CD8-positive, alpha-beta T cell (primary cell): ENCODE measurements at regions of chr1 and their contacts with region 1.

Region 1: DNA sequence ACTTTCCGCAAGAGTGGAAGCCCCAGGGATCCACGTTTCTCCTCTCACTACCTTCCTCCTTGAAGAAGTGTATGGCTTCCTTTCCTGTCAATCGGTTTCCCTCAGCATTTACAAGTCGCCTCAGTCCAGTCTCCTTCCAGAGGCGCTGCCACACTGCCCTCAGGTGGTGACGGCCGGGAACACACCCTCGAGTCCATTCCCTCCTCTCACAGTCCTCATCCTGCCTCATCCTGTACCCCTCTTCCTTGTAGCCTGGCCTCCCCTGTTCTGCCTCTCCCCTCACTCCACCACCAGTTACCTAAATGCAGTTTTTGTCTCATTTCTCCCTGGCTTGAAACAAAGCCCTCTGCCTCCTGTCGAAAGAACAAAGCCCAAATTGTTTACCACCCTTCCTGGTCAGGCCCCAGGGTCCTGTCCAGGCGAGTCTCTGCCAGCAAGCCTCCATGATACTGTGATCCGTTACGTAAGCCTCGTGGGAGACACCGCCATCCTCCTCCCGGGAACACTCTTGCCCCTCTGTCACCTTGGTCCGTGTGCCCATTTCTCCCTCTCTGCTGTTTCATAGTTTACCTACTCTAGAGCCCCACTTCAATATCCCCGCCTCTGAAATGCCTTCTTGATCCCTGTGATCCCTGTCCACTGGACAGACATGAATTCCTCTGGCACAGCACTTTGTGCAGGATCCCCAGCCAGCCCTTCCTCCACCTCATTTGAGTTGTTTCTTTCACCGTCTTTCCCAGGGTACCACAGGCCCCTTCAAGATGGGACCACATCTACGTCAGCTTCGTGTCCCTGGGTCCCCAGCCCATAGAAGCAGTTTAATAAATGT is 23.3 kb upstream of the LSM10 start:
- DNase-seq: peak; percentile 82 to 96 (median 89)
- ATAC-seq: peak; percentile 100
- H3K4me3 ChIP-seq: peak overlapping the region in 1 of 2 experiments; percentile 7
- H3K4me3 Mint-ChIP-seq: peak overlapping the region; percentile 64
- H3K27ac ChIP-seq: peak overlapping the region in 1 of 2 experiments; percentile 60
- H3K27ac Mint-ChIP-seq: peak overlapping the region; percentile 88
- H3K4me1 ChIP-seq: peaks cover 18% of the 10 kb centered on the region
- H3K4me1 Mint-ChIP-seq: peaks cover 23% of the 10 kb centered on the region
- H3K27me3 ChIP-seq: no peaks in the 10 kb centered on the region
- H3K27me3 Mint-ChIP-seq: no peaks in the 10 kb centered on the region
- CTCF ChIP-seq: peak; percentile 87

Region 2: GRCh38 chr1:36083993-36084738 is 336.9 kb before region 1 on chr1 and contains the start of gene TEKT2:
- CTCF ChIA-PET with region 1: no interaction called
- POLR2A ChIA-PET with region 1: no interaction called
- intact Hi-C with region 1: no loop called
- DNase-seq: peak in 2 of 9 experiments; percentile 44 to 55
- ATAC-seq: no peak
- H3K4me3 ChIP-seq: no peak within 1 kb of the TSS
- H3K4me3 Mint-ChIP-seq: peak within 1 kb of the TSS; percentile 5
- H3K27ac ChIP-seq: no peak within 1 kb of the TSS
- H3K27ac Mint-ChIP-seq: no peak within 1 kb of the TSS
- H3K4me1 ChIP-seq: peaks cover 8% of the 10 kb centered on the region
- H3K4me1 Mint-ChIP-seq: peaks cover 7% of the 10 kb centered on the region
- H3K27me3 ChIP-seq: peaks cover 5 to 9% of the 10 kb centered on the region in 2 experiments
- H3K27me3 Mint-ChIP-seq: peaks cover 38% of the 10 kb centered on the region
- CTCF ChIP-seq: no peak
- total RNA-seq, gene TEKT2: 0.35 to 0.47 TPM

Region 3: GRCh38 chr1:36099681-36100341 is 321.2 kb before region 1 on chr1:
- CTCF ChIA-PET with region 1: interaction called, 4 read pairs
- POLR2A ChIA-PET with region 1: no interaction called
- intact Hi-C with region 1: loop called in 1 of 2 experiments (anchors 1 kb)
- DNase-seq: peak; percentile 55 to 89 (median 80)
- ATAC-seq: peak; percentile 88
- H3K4me3 ChIP-seq: peak overlapping the region in 1 of 2 experiments; percentile 7
- H3K4me3 Mint-ChIP-seq: no peak overlapping the region
- H3K27ac ChIP-seq: no peak overlapping the region
- H3K27ac Mint-ChIP-seq: no peak overlapping the region
- H3K4me1 ChIP-seq: peaks cover 8% of the 10 kb centered on the region
- H3K4me1 Mint-ChIP-seq: peaks cover 4% of the 10 kb centered on the region
- H3K27me3 ChIP-seq: no peaks in the 10 kb centered on the region
- H3K27me3 Mint-ChIP-seq: no peaks in the 10 kb centered on the region
- CTCF ChIP-seq: peak; percentile 83

Region 4: GRCh38 chr1:36285448-36286101 is 135.5 kb before region 1 on chr1:
- CTCF ChIA-PET with region 1: interaction called, 6 read pairs
- POLR2A ChIA-PET with region 1: no interaction called
- intact Hi-C with region 1: loop called in 1 of 2 experiments (anchors 2 kb)
- DNase-seq: peak; percentile 32 to 91 (median 65)
- ATAC-seq: peak; percentile 98
- H3K4me3 ChIP-seq: no peak overlapping the region
- H3K4me3 Mint-ChIP-seq: no peak overlapping the region
- H3K27ac ChIP-seq: no peak overlapping the region
- H3K27ac Mint-ChIP-seq: peak overlapping the region; percentile 9
- H3K4me1 ChIP-seq: peaks cover 4% of the 10 kb centered on the region
- H3K4me1 Mint-ChIP-seq: peaks cover 11% of the 10 kb centered on the region
- H3K27me3 ChIP-seq: no peaks in the 10 kb centered on the region
- H3K27me3 Mint-ChIP-seq: no peaks in the 10 kb centered on the region
- CTCF ChIP-seq: peak; percentile 68

Region 5: GRCh38 chr1:36369061-36369861 is 51.8 kb before region 1 on chr1:
- CTCF ChIA-PET with region 1: interaction called, 35 read pairs
- POLR2A ChIA-PET with region 1: no interaction called
- intact Hi-C with region 1: loop called (anchors 1 kb)
- DNase-seq: peak; percentile 75 to 91 (median 85)
- ATAC-seq: peak; percentile 62
- H3K4me3 ChIP-seq: no peak overlapping the region
- H3K4me3 Mint-ChIP-seq: no peak overlapping the region
- H3K27ac ChIP-seq: peak overlapping the region in 1 of 2 experiments; percentile 25
- H3K27ac Mint-ChIP-seq: peak overlapping the region; percentile 79
- H3K4me1 ChIP-seq: peaks cover 55% of the 10 kb centered on the region
- H3K4me1 Mint-ChIP-seq: peaks cover 68% of the 10 kb centered on the region
- H3K27me3 ChIP-seq: no peaks in the 10 kb centered on the region
- H3K27me3 Mint-ChIP-seq: no peaks in the 10 kb centered on the region
- CTCF ChIP-seq: peak; percentile 88